Right ventricle myocardium superior (tissue), 1 donor: ENCODE measurements at regions of chr3 and their contacts with region 1.

Region 1: DNA sequence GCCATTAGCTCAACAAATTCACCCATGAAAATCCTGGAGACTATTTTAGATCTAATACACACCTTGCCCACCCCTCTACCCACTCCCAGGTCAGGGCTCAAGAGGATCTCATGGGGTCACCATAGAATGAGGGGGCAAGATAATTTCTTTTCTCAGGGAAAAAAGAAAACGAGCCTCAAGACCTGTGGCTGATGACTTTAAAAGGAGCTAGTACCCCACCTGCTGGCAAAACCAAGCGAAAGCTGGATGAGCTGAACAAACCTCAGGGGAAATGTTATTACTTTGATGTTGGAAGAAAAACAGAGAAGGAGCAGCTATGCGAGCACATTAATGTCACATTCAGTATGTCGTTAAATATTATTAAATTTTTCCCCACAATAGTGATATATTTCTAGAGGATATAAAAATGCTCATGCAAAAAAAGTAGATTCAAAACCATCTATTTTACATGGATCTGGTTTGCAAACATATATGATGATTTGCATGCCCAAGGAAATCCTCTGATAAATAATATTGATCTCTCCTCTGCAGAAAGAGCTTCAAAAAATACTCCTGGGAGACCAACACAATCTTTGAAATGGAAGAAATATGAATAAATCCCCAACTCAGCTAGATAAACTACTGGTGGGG is 37.7 kb downstream of the PLD1 start:
- DNase-seq: peak; percentile 51
- ATAC-seq: peak; percentile 51

Region 2: GRCh38 chr3:171654809-171655208 is 117.7 kb before region 1 on chr3:
- intact Hi-C with region 1: loop called (anchors 10 kb)
- DNase-seq: peak; percentile 78
- ATAC-seq: peak; percentile 91

Region 3: GRCh38 chr3:171703756-171704401 is 68.7 kb before region 1 on chr3:
- intact Hi-C with region 1: loop called (anchors 10 kb)
- DNase-seq: no peak
- ATAC-seq: no peak

Region 4: DNA sequence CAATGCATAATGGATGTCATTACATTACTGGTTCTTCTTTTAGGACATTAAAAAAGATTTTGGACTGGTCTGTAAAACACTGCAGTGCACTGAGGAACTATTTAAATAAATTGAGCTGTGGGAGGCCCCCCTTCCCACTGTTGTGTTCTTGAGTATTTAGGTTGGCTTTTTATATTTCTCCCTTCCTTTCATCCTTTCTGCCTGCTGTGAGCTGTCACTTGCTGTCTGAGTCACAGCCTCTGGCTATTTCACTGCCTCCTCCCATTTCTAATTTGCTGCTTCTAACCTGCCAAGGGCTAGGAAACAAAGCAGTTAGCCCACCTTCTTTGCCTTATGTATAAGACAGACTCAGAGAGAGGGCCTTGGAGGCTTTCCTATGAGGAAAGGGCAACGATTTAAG is 177.8 kb after region 1 on chr3:
- intact Hi-C with region 1: no loop called
- DNase-seq: no peak
- ATAC-seq: no peak